ENCODE measurements at regions of chr7 and their contacts with region 1.

Region 1: GRCh38 chr7:97145068-97145467 is 27.6 kb downstream of the SDHAF3 start:
- DNase-seq: no peak

Region 2: GRCh38 chr7:97155897-97156418 is 10.9 kb after region 1 on chr7:
- intact Hi-C with region 1: loop called in 1 of 2 experiments (anchors 2 kb)
- DNase-seq: no peak

Measured in posterior vena cava (tissue), 2 donors.